Dendritic cell treated with granulocyte-macrophage colony-stimulating factor and Interleukin-4, amounts not matched to agents 40 ng/mL and 50 ng/mL, for 4 days (primary cell): ENCODE measurements at regions of chr9 and their contacts with region 1.

Region 1: GRCh38 chr9:110900917-110901316 is 137.4 kb downstream of the LPAR1 start:
- H3K4me3 Mint-ChIP-seq: no peak overlapping the region
- H3K27ac Mint-ChIP-seq: peak overlapping the region; percentile 66
- H3K4me1 Mint-ChIP-seq: peaks cover 21% of the 10 kb centered on the region
- H3K27me3 Mint-ChIP-seq: peaks cover 6% of the 10 kb centered on the region

Region 2: GRCh38 chr9:110919609-110920008 is 18.7 kb after region 1 on chr9:
- intact Hi-C with region 1: no loop called
- H3K4me3 Mint-ChIP-seq: no peak overlapping the region
- H3K27ac Mint-ChIP-seq: peak overlapping the region; percentile 81
- H3K4me1 Mint-ChIP-seq: peaks cover 38% of the 10 kb centered on the region
- H3K27me3 Mint-ChIP-seq: no peaks in the 10 kb centered on the region

Region 3: DNA sequence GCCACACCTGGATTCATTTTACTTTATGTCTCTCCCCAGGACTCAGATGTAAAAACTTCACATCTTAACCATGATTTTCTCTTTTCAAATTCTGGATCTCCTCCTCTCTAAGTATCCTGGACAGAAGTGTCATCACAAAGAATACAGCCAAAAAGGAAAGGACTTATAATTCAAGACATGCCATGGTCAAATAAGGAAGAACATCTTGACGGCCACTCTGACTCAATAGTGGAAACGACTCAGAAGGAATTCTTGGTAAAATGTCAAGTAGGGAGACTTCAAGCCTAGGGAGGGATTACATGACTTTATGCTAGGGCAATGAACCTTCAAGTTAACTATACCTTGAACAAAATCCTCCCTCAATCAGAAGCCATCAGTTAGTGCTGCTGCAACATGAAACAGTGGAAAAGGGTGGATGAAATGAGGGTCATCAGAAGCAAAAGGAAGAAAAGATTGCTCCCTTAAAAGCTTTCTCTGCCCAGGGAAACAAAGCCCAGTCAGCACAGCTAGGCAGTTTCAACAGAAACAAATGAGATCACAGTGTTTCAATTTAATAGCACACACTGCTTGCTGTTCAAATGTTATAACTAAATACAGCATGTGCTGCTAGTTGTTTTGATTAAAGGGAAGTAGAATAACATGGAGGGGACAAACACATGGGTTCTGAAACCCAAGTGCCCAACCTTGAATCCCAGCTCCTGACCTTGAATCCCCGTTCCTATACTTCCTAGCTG is 36.0 kb after region 1 on chr9:
- intact Hi-C with region 1: loop called (anchors 5 kb)
- H3K4me3 Mint-ChIP-seq: no peak overlapping the region
- H3K27ac Mint-ChIP-seq: peak overlapping the region; percentile 60
- H3K4me1 Mint-ChIP-seq: peaks cover 43% of the 10 kb centered on the region
- H3K27me3 Mint-ChIP-seq: peaks cover 10% of the 10 kb centered on the region